ENCODE measurements at regions of chr15 and their contacts with region 1.

Region 1: GRCh38 chr15:81274931-81275707 is 48.8 kb downstream of the STARD5 start:
- DNase-seq: peak; percentile 67 to 80
- ATAC-seq: peak; percentile 82 to 97
- H3K4me3 ChIP-seq: no peak overlapping the region
- H3K27ac ChIP-seq: no peak overlapping the region
- H3K4me1 ChIP-seq: no peaks in the 10 kb centered on the region
- CTCF ChIP-seq: peak; percentile 84
- EP300 ChIP-seq: no peak
- POLR2A ChIP-seq: no peak
- RAD21 ChIP-seq: peak; percentile 94 to 97

Region 2: DNA sequence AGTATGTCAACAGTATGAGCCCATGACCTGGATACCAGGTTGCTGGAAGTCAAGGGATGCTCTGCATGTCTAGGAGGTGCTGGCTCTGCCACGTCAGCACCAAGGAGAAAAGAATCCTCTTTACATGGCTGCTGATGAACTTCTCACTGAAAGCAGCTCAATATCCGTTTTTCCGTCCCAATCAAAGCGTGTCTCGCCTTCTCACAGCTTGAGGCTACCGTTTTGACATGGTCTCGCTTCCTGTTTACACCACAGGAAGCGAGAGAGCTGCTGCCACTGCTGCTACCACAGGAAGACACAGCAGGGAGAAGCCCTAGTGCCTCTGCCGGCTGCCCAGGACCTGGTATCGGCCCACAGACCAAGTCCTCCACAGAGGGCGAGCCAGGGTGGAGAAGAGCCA is 21.6 kb after region 1 on chr15:
- CTCF ChIA-PET with region 1: interaction called, 24 read pairs
- POLR2A ChIA-PET with region 1: no interaction called
- DNase-seq: no peak
- ATAC-seq: no peak
- H3K4me3 ChIP-seq: no peak overlapping the region
- H3K27ac ChIP-seq: no peak overlapping the region
- H3K4me1 ChIP-seq: peaks cover 16% of the 10 kb centered on the region
- CTCF ChIP-seq: no peak
- EP300 ChIP-seq: no peak
- POLR2A ChIP-seq: no peak
- RAD21 ChIP-seq: no peak

Region 3: DNA sequence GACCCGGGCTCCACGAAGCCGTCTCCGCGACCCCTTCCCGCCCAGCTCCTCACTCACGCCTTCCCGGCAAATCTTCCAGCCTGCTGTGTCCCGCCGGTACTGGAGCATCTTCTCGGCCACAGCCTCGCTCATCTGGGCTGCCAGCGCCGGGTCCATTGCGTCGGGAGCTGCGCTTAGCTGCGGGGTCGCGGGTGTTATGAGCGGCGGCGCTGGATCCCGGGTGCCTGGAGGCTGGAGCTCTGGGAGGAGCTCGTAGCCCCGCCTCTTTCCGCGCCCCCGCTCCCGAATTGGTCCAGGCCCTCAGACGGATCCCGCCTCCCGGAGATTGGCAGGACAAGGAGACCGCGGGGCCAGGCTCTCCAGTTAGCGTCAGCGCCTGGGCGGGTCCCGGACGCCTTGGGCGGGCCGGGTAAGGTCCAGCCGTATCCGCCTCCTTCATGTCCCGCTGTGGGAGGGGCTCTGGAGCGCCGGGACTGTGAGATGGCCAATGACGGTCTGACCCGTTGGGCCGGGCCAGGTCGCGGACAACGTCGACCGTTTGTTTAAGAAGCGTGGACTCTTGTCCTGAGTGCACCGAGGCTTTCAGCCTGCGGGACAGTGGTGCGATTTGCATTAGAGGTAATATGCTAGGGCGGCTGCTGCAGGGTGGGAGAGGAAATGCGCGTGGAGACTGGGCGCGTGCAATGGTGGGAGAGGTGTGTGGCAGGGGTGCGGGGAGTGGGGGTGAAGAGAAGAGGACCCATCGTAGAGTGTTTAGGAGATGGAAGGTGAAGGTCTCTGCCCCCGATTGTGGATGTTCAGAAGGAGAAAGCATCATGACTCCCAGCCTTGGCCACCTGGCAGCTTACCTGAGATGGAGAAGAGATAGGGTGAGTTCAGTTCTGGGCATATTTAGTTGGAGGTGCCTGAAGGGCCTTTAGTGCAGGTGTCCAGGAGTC is 49.1 kb after region 1 on chr15 and contains the start of gene STARD5:
- CTCF ChIA-PET with region 1: interaction called, 10 read pairs
- POLR2A ChIA-PET with region 1: no interaction called
- DNase-seq: peak; percentile 95 to 99
- ATAC-seq: peak; percentile 98 to 100
- H3K4me3 ChIP-seq: peak within 1 kb of the TSS; percentile 61
- H3K27ac ChIP-seq: peak within 1 kb of the TSS; percentile 60 to 81; a peak in 5 of 6 replicates
- H3K4me1 ChIP-seq: peaks cover 8% of the 10 kb centered on the region; the same call in 1 of the 3 replicates
- CTCF ChIP-seq: no peak
- EP300 ChIP-seq: no peak
- POLR2A ChIP-seq: peak; percentile 74
- RAD21 ChIP-seq: no peak
- polyA plus RNA-seq, gene STARD5: 2.8 TPM in 2 replicates

Region 4: DNA sequence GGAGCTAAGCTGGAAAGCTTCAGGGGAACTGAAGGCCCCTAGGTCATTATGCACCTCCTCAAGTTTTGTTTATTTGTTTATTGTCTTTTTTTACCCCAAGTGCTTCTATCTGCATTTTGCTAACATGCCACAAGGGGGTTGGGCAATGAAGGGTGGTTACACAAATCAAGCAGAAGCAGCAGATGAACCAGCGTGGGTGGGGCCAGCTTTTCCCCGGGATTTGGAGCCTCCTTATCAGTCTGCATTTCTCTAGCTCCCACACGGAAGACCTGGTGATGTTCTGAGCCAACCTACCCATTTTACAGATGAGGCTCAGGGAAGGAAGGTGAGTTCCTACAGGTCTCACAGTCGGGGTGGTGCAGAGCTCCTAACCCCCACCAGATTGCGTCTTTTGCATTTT is 82.1 kb after region 1 on chr15:
- CTCF ChIA-PET with region 1: interaction called, 11 read pairs
- POLR2A ChIA-PET with region 1: no interaction called
- DNase-seq: peak in 1 of 2 experiments; percentile 20
- ATAC-seq: peak in 1 of 2 experiments; percentile 63; a peak in 3 of 6 replicates
- H3K4me3 ChIP-seq: no peak overlapping the region
- H3K27ac ChIP-seq: no peak overlapping the region
- H3K4me1 ChIP-seq: no peaks in the 10 kb centered on the region
- CTCF ChIP-seq: no peak
- EP300 ChIP-seq: no peak
- POLR2A ChIP-seq: no peak
- RAD21 ChIP-seq: no peak

Region 5: DNA sequence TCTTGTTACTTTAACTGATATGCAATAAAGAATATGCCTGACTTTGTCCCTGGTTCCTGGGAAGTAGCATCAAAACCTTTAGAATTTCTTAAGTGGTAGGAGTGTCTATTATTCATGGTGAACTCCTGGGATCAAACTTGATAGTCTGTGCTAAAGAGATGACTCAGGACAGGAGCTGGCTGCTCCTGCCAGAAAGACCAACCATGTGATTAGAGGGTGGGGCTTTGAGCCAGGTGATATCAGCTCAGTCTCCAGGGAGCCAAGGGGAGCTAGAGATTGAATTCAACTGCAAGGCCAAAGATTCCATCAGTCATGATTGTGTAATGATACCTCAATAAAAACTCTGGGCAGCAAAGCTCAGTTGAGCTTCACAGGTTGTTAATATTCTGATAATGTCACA is 119.5 kb after region 1 on chr15:
- CTCF ChIA-PET with region 1: interaction called, 361 read pairs
- POLR2A ChIA-PET with region 1: no interaction called
- DNase-seq: no peak
- ATAC-seq: no peak
- H3K4me3 ChIP-seq: no peak overlapping the region
- H3K27ac ChIP-seq: no peak overlapping the region
- H3K4me1 ChIP-seq: no peaks in the 10 kb centered on the region
- CTCF ChIP-seq: no peak
- EP300 ChIP-seq: no peak
- POLR2A ChIP-seq: no peak
- RAD21 ChIP-seq: no peak

Measured in A549 (cell line).